ENCODE measurements at regions of chr3 and their contacts with region 1.

Region 1: DNA sequence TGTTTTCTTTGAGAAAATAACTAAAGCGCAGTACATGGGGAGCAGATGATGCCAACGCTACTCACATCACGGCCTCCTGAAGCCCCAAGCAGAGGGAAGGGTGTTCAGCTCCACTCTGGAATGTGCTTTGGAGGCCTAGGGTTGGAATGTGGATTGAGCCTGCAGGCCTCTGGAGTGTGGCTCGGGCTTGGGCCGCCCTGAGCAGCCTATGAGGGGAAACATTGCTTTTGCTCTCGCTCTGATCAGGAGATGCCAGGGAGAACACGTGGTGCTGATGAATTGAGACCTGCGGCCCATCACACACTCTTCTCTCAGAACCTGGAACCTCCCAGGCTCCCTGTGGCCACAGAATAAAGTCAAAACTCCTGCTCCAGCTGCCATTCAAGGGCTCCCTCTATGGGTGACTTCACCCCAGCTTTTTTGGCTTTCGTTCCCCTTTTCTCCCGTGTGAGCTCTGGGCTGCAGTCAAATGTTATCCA is 23.3 kb downstream of the CCDC13 start:
- DNase-seq: peak in 1 of 6 donors; percentile 37
- ATAC-seq: peak; percentile 26 to 49 (median 38)
- H3K4me3 ChIP-seq: no peak overlapping the region
- H3K27ac ChIP-seq: peak overlapping the region in 2 of 4 donors; percentile 40 to 58
- H3K4me1 ChIP-seq: peaks cover 0 to 10% (median 6%) of the 10 kb centered on the region in 3 donors
- H3K27me3 ChIP-seq: no peaks in the 10 kb centered on the region
- CTCF ChIP-seq: peak in 1 of 4 donors; percentile 5

Region 2: DNA sequence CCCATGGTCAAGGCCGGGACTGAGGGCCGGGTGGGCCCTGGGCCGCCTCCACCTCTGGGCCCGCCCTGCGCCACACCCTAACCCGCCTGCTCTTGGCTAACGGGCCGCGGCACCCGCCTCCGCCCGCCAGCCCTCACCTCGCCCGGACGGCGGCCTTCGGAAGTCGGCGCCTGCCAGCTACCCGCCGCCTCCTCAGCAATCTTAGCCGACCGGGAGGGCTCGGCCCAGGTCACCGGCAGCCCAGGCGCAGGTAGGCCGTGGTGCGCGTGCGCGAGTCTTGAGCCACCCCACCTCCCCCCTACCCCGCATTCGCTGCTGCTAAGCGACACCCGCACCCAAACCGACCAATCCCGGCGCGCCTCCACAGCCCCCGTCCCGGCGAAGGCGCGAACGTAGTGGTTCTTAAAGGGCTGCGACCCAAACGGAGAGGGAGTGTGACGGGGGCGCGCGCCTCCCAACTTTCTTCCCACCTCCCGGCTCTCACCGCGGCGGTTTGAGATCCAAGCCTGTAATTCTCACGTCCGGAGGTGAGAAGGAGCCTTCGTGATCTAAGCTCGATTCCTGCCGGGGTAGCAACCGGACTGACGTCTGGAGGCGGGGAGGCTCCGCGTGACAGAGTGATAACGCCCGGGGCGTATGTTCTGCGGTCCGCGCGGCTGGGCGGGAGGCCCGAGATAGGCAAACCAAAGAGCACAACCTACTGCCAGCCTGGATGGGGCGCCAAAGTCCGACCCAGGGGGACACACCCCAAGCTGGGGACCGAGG is 167.9 kb before region 1 on chr3 and contains the start of gene SEC22C:
- intact Hi-C with region 1: loop called in 1 of 3 experiments (anchors 10 kb)
- DNase-seq: peak; percentile 96 to 99 (median 97)
- ATAC-seq: peak; percentile 95 to 99 (median 98)
- H3K4me3 ChIP-seq: peak within 1 kb of the TSS; percentile 71 to 95 (median 86)
- H3K27ac ChIP-seq: peak within 1 kb of the TSS; percentile 72 to 84 (median 81)
- H3K4me1 ChIP-seq: peaks cover 3 to 11% (median 9%) of the 10 kb centered on the region in 3 donors
- H3K27me3 ChIP-seq: no peaks in the 10 kb centered on the region
- CTCF ChIP-seq: no peak
- total RNA-seq, gene SEC22C: 19.5 to 26.1 (median 21.7) TPM

Region 3: DNA sequence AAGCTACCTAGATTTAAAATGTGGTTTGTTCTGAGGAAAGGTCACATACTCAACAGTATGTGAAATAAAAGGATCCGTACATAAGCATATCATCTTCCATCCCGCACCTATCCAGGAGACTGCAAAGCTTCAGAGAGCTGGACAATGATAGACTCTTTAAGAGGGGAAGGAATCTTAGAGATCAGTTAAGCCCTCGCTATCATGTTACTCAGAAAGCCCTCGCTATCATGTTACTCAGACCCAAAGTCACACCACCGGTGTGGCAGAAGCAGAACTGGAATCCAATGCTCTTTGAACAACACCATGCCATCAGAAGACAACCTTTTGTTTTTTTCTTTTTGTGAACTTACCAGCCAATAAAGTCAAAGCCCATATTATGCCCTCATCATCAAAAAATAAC is 866.2 kb after region 1 on chr3:
- intact Hi-C with region 1: no loop called
- DNase-seq: no peak
- ATAC-seq: no peak
- H3K4me3 ChIP-seq: no peak overlapping the region
- H3K27ac ChIP-seq: no peak overlapping the region
- H3K4me1 ChIP-seq: peaks cover 0 to 4% (median 0%) of the 10 kb centered on the region in 3 donors
- H3K27me3 ChIP-seq: no peaks in the 10 kb centered on the region
- CTCF ChIP-seq: no peak